Psoas muscle (tissue), 8 donors: ENCODE measurements at regions of chr3 and their contacts with region 1.

Region 1: GRCh38 chr3:129195731-129196256 is 12.1 kb upstream of the CNBP start:
- DNase-seq: peak; percentile 46 to 76
- ATAC-seq: peak; percentile 94 to 95 (median 95)
- H3K4me3 ChIP-seq: peak overlapping the region; percentile 28
- H3K27ac ChIP-seq: peak overlapping the region; percentile 88
- H3K4me1 ChIP-seq: peaks cover 56% of the 10 kb centered on the region
- H3K27me3 ChIP-seq: no peaks in the 10 kb centered on the region
- CTCF ChIP-seq: no peak

Region 2: DNA sequence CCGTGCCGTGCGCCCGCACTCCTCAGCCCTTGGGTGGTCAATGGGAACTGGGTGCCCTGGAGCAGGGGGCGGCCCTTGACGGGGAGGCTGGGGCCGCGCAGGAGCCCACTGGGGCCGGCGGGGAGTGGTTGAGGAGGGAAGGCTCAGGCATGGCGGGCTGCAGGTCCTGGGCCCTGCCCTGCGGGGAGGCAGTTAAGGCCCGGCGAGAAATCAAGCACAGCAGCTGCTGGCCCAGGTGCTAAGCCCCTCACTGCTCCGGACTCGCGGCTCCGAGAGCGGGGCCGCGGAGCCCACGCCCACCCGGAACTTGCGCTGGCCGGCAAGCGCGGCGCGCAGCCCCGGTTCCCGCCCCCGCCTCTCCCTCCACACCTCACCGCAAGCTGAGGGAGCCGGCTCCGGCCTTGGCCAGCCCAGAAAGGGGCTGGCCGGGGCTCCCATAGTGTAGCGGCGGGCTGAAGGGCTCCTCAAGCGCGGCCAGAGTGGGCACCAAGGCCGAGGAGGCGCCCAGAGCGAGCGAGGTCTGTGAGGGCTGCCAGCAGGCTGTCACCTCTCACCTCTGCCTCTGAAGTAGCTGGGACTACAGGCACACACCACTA is 127.4 kb before region 1 on chr3:
- intact Hi-C with region 1: no loop called
- DNase-seq: no peak
- ATAC-seq: no peak
- H3K4me3 ChIP-seq: peak overlapping the region; percentile 50
- H3K27ac ChIP-seq: no peak overlapping the region
- H3K4me1 ChIP-seq: no peaks in the 10 kb centered on the region
- H3K27me3 ChIP-seq: peaks cover 0 to 16% (median 3%) of the 10 kb centered on the region in 3 donors
- CTCF ChIP-seq: no peak

Region 3: GRCh38 chr3:129211772-129212171 is 16.0 kb after region 1 on chr3:
- intact Hi-C with region 1: loop called in 1 of 2 experiments (anchors 2 kb)
- DNase-seq: peak; percentile 72 to 86
- ATAC-seq: peak; percentile 99 to 100 (median 100)
- H3K4me3 ChIP-seq: peak overlapping the region; percentile 41
- H3K27ac ChIP-seq: peak overlapping the region; percentile 72
- H3K4me1 ChIP-seq: peaks cover 16% of the 10 kb centered on the region
- H3K27me3 ChIP-seq: no peaks in the 10 kb centered on the region
- CTCF ChIP-seq: no peak